ENCODE measurements at regions of chr15 and their contacts with region 1.

Region 1: DNA sequence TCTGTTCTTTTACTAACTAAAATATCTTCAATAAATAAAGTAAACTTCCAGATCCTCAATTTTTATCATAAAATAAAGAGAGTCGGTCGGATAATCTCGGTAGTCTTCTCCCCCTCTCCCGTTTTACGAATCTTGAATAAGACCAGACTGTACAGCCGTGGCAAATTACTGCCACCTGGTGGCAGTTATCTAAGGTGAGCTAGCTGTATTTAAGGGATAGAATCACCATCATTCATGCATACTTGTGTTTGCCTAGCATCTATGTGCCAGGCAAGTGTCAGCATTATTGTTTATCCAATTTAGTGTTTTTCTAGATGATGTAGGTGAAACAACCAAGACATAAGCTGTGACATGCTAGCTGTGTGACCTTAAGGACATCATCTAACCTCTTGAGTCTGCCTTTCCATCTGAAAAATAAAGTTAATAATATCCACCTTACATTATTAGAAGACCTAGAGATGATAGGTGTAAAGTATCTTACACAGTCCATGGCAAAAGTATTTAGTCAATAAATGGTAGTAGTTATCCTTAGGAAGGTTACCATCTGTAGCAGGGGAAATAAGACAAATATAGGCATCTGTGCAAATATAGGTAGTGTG is 21.3 kb downstream of the DUT start:
- DNase-seq: no peak
- H3K4me3 ChIP-seq: no peak overlapping the region
- H3K27ac ChIP-seq: no peak overlapping the region
- H3K27me3 ChIP-seq: no peaks in the 10 kb centered on the region
- CTCF ChIP-seq: peak; percentile 76

Region 2: DNA sequence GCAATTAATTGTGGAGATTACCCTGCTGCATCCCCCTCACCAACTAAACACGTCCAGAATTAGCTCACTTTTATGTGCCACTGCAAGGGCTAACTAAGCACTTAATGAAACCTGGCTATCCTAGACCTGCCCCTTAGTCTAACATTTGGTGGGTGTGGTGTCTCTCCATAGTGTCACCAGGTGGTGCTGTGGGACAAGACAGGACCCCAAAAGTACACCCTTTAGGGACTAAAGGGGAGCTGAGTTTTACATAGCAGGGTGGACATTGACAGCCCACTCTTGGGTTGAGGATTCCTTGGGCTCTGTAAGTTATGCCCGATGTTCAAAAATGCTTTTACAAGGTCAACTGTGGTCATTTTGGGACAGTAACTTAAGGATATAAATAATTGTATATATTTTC is 15.6 kb before region 1 on chr15:
- CTCF ChIA-PET with region 1: interaction called, 32 read pairs
- POLR2A ChIA-PET with region 1: no interaction called
- DNase-seq: no peak
- H3K4me3 ChIP-seq: no peak overlapping the region
- H3K27ac ChIP-seq: no peak overlapping the region
- H3K27me3 ChIP-seq: no peaks in the 10 kb centered on the region
- CTCF ChIP-seq: peak; percentile 40

Region 3: DNA sequence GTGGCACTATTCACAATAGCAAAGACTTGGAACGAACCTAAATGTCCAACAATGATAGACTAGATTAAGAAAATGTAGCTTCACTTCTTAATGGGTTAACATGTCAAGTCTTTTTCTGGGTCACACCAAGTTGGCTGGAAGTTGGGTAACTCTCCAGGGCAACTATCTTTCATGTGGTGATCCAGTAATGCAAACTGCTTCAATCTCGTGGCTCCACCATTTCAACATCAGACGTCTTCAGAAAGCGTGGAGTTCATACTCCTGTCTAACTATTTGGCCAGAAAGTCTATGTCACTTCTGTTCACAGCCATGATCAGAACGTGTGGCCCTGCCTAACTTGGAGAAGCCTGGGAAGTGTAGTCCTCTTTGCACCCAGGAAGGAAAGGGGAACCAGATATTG is 10.9 kb after region 1 on chr15:
- CTCF ChIA-PET with region 1: interaction called, 16 read pairs
- POLR2A ChIA-PET with region 1: no interaction called
- DNase-seq: no peak
- H3K4me3 ChIP-seq: no peak overlapping the region
- H3K27ac ChIP-seq: no peak overlapping the region
- H3K27me3 ChIP-seq: no peaks in the 10 kb centered on the region
- CTCF ChIP-seq: no peak

Measured in AG04450 (cell line).